Gastrocnemius medialis (tissue), 4 donors: ENCODE measurements at regions of chr9 and their contacts with region 1.

Region 1: GRCh38 chr9:104868687-104869404 is 59.1 kb downstream of the ABCA1 start:
- DNase-seq: peak; percentile 78 to 90
- ATAC-seq: peak; percentile 88 to 89
- H3K4me3 ChIP-seq: peak overlapping the region in 1 of 4 donors; percentile 14
- H3K27ac ChIP-seq: peak overlapping the region; percentile 84 to 92 (median 90)
- H3K4me1 ChIP-seq: peaks cover 67 to 69% of the 10 kb centered on the region in 2 donors
- H3K27me3 ChIP-seq: no peaks in the 10 kb centered on the region
- CTCF ChIP-seq: no peak
- POLR2A ChIP-seq: no peak

Region 2: DNA sequence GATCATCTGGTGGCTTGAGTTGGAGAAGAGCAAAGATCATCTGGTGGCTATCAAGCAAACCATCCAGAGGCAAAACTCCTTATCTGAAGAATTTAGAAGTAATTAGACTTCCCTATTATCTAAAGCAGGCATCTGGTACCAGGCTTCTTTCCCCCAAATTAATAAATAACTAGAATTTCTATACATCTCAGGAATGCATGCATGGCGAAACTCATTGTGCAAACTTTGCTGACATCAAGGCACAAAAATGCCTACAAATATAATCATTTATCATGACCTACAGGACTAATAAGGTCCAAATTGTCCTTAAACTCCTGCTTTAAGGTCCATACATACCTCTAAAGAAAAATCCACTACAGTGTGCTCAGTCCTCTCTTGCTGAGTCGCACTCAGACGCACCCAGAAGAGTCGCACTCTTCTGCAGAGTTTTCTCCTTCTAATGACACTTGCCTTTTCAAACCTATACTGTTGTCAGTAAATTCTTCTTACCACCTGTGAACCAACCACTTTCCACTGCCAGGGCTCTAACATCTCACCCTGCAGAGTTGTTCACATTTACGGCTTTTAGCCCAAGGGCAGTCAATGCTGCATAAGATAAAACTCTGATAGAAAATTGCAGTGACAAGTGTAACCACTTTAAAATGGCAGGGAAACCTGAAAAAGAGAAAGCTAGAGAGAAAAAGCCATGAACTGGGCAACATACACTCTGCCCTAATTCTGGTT is 168.4 kb before region 1 on chr9:
- in situ Hi-C with region 1: no loop called
- intact Hi-C with region 1: no loop called
- DNase-seq: no peak
- ATAC-seq: no peak
- H3K4me3 ChIP-seq: no peak overlapping the region
- H3K27ac ChIP-seq: no peak overlapping the region
- H3K4me1 ChIP-seq: no peaks in the 10 kb centered on the region
- H3K27me3 ChIP-seq: no peaks in the 10 kb centered on the region
- CTCF ChIP-seq: no peak
- POLR2A ChIP-seq: no peak

Region 3: DNA sequence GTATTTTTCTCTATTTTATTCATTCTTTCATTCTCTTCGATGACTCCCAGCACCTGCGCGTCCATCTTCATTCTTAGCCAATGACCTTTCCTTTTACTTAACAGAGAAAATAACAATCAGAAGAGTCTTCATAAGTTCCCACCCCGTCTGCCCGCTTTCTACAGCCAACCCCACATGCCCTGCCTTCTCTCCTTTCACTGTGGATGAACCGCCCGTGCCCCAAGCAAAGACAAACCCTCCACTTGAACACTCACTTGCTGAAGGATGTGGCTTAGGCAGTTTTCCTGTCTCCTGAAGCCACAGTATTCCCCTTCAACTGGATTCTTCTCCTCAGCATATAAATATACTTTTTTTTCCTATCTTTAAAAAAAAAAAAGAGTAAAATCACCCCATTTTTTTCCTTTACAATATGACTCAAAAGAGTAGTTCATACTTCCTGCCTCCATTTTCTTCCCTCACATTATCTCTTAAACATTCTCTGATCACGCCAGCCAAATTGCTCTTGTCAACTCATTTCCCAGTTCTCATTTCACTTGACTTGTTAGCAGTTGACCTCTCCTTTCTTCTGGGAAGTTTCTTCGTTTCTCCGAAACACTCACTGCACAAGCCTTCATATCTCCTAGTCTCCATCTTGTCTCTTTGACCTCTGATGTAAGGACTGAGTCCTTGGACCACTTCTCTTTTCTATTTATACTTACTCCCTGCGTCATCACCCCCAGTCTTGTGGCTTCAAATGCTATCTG is 93.8 kb before region 1 on chr9:
- in situ Hi-C with region 1: no loop called
- intact Hi-C with region 1: loop called (anchors 5 kb)
- DNase-seq: peak; percentile 38 to 64
- ATAC-seq: peak; percentile 75 to 87
- H3K4me3 ChIP-seq: peak overlapping the region in 2 of 4 donors; percentile 11 to 35
- H3K27ac ChIP-seq: peak overlapping the region; percentile 79 to 89 (median 88)
- H3K4me1 ChIP-seq: peaks cover 43 to 59% of the 10 kb centered on the region in 2 donors
- H3K27me3 ChIP-seq: no peaks in the 10 kb centered on the region
- CTCF ChIP-seq: no peak
- POLR2A ChIP-seq: peak; percentile 48 to 58

Region 4: DNA sequence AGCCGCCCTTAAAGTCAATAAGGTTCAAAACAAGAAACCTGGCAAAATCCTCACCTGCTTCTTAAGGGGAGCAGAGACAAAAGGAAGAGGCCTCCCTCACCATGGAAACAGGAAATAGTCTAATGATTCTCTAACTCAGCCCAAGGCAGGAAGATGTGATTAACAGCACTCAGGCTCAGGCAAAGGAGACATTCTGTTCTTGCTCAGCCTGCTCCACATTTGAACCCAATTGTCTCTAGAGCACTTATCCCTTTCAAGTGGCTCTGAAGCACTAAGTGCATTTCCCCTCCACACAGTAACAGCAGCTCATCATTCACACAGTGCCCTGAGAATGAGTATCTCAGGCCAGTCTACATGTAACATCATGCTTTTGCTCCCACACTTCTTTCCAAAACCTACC is 32.6 kb before region 1 on chr9:
- in situ Hi-C with region 1: no loop called
- intact Hi-C with region 1: no loop called
- DNase-seq: no peak
- ATAC-seq: no peak
- H3K4me3 ChIP-seq: no peak overlapping the region
- H3K27ac ChIP-seq: peak overlapping the region in 1 of 4 donors; percentile 18
- H3K4me1 ChIP-seq: no peaks in the 10 kb centered on the region
- H3K27me3 ChIP-seq: no peaks in the 10 kb centered on the region
- CTCF ChIP-seq: no peak
- POLR2A ChIP-seq: no peak

Region 5: DNA sequence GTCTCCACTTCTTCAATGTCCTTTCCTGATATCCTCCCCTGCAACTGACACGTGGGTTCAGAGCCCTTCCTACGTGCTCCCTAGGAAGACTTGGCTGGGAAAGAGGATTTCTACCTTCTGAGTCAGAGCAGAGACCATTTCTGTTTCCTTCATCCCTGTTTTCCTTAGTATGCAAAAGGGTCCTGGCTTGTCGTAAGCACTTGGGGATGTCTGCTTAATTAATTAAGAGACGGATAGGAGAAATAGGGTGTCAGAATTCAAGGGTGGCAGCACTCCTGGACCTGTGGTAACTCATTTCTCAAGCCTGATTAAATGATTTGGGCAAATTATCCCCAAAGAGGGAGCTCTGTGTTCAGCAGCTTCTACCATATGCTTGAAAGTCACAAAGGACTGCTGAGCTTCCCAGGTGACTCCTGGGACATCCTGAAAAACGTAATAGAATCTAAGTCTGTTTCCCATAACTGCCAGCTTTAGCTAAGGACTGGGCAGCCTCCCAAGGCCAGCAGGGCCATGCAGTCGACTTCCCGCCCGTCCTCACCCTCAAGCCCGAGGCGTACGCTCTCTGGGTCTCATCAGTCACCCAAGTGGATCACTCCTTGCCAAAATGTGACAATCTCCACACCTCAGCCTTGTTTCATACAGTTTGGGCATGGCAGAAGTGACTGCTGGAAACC is 38.6 kb after region 1 on chr9:
- in situ Hi-C with region 1: loop called in 1 of 4 experiments (anchors 5 kb)
- intact Hi-C with region 1: loop called (anchors 2 kb)
- DNase-seq: peak in 1 of 2 donors; percentile 25
- ATAC-seq: peak; percentile 28 to 70
- H3K4me3 ChIP-seq: no peak overlapping the region
- H3K27ac ChIP-seq: peak overlapping the region; percentile 24 to 71 (median 60)
- H3K4me1 ChIP-seq: peaks cover 90 to 97% of the 10 kb centered on the region in 2 donors
- H3K27me3 ChIP-seq: no peaks in the 10 kb centered on the region
- CTCF ChIP-seq: no peak
- POLR2A ChIP-seq: no peak

Region 6: DNA sequence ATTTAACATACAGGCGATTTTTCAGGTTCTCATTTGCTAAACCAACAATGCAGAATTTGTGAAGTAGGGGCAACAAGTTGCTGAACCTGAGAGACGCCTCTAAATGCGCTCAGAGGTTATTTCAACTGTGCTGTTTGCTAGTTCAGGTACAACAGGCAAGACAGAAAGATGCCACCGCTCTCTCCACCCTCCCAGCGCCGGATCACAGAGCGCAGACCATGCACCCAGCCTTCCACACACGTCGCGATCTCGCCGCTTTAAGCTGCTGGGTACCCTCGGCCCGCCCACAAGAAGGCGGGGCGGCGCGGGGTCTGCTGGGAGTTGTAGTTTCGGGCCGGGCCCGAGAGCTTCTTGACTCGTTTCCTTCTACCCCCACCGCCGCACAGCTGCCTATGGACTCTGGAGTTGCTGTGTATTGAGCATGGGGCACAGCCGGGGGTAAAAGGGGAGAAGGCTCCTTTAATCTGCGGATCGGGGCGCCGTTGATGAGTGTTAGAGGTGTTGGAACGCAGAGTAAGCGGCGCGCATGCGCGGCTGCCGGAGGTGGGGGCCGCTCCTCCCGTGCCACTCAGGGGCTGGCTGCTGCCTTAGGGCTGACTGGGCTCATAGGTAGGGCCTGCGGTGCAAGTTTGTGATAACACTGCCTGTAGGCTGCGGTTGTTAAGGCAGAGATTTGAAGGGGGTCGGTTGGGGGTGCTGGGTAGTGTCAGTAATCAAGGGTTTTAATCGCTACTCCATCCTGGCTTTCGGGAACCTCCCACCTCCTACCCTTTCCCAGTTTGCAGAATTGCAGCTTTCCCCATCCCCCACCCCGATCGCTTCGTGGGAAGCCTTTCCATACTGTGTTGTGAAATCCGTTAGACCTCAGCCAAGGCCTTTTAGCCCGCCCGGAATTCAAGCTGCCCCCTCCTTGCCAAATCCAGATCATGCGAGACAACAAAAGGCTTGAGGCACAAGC is 99.5 kb after region 1 on chr9:
- in situ Hi-C with region 1: no loop called
- intact Hi-C with region 1: loop called (anchors 2 kb)
- DNase-seq: peak; percentile 77 to 94
- ATAC-seq: peak; percentile 91 to 93
- H3K4me3 ChIP-seq: peak overlapping the region; percentile 80 to 97 (median 82)
- H3K27ac ChIP-seq: peak overlapping the region; percentile 94 to 99 (median 96)
- H3K4me1 ChIP-seq: peaks cover 21 to 25% of the 10 kb centered on the region in 2 donors
- H3K27me3 ChIP-seq: no peaks in the 10 kb centered on the region
- CTCF ChIP-seq: peak in 1 of 5 experiments; percentile 25
- POLR2A ChIP-seq: peak in 1 of 2 donors; percentile 54

Region 7: DNA sequence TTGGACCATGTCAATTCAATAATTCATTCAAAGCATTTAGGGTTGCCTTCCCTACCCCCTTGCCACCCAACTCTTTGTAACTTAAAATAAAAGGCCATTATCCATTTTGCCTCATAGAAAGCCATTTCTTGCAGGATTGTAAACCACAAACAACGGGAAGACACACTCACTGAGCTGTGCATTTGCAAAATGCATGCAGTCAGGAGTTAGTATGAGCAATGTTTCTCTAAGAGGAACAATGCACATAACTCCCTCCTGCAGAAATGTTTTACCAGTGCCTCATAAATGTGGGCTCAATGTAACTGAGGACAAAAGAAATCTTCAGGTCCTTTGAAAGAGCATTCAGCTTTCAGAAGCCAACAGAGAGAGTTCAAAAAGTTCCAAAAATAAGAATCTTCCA is 157.6 kb after region 1 on chr9:
- in situ Hi-C with region 1: no loop called
- intact Hi-C with region 1: no loop called
- DNase-seq: no peak
- ATAC-seq: no peak
- H3K4me3 ChIP-seq: no peak overlapping the region
- H3K27ac ChIP-seq: no peak overlapping the region
- H3K4me1 ChIP-seq: no peaks in the 10 kb centered on the region
- H3K27me3 ChIP-seq: no peaks in the 10 kb centered on the region
- CTCF ChIP-seq: no peak
- POLR2A ChIP-seq: no peak

Region 8: DNA sequence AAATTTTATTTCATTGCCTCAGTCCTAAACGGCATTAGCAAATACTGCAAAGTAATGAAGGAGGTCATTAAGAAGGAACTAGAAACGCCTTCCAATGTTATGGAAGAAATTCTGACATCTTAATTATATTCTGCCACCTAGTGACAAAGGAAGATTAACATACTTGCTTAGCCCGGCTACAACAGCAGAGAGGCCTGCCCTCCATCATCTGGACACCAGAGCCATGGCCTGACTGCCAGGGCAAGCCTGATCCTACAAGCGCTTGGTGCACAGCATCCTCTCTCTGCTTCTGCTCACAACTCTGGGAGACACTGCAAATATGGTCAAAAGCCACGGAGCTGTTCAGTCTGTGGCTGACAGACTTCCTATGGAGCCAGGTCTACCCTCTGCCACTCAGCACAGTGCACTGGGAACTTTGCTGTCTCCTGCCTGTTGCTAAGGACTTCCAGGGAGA is 288.3 kb after region 1 on chr9:
- in situ Hi-C with region 1: loop called (anchors 5 to 10 kb)
- intact Hi-C with region 1: loop called (anchors 2 kb)
- DNase-seq: peak; percentile 14 to 57
- ATAC-seq: peak; percentile 96 to 98
- H3K4me3 ChIP-seq: no peak overlapping the region
- H3K27ac ChIP-seq: no peak overlapping the region
- H3K4me1 ChIP-seq: peaks cover 3 to 5% of the 10 kb centered on the region in 2 donors
- H3K27me3 ChIP-seq: no peaks in the 10 kb centered on the region
- CTCF ChIP-seq: peak in 4 of 5 experiments; percentile 38 to 60 (median 58)
- POLR2A ChIP-seq: no peak